A673 (cell line): ENCODE measurements at regions of chr3 and their contacts with region 1.

Region 1: DNA sequence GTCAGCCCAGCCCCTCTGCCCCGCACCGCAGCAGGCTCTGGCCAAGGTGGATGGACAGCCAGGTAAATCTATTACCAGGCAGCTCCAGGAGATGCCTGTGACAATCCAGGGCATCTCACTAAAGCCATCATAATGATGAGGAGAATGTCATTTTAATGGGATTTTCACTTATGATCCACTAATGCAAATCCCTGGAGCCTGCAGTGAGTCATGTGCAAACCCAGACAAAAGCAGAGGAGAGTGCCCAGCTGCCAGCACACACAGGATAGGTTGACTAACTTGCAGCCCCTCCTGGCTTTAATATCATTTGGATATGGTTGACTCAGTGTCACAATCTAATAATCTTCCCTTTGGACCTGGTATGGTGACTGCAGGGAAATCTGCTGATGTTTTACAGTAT is 206.9 kb upstream of the TRIM42 start:
- DNase-seq: peak; percentile 37
- H3K4me3 ChIP-seq: no peak overlapping the region
- H3K27ac ChIP-seq: no peak overlapping the region
- H3K4me1 ChIP-seq: no peaks in the 10 kb centered on the region
- H3K27me3 ChIP-seq: no peaks in the 10 kb centered on the region
- CTCF ChIP-seq: no peak

Region 2: GRCh38 chr3:141804787-141805639 is 1334.1 kb after region 1 on chr3:
- CTCF ChIA-PET with region 1: no interaction called
- POLR2A ChIA-PET with region 1: interaction called, 12 read pairs
- intact Hi-C with region 1: no loop called
- DNase-seq: no peak
- H3K4me3 ChIP-seq: no peak overlapping the region
- H3K27ac ChIP-seq: no peak overlapping the region
- H3K4me1 ChIP-seq: no peaks in the 10 kb centered on the region
- H3K27me3 ChIP-seq: no peaks in the 10 kb centered on the region
- CTCF ChIP-seq: no peak